ENCODE measurements at regions of chr7 and their contacts with region 1.

Region 1: DNA sequence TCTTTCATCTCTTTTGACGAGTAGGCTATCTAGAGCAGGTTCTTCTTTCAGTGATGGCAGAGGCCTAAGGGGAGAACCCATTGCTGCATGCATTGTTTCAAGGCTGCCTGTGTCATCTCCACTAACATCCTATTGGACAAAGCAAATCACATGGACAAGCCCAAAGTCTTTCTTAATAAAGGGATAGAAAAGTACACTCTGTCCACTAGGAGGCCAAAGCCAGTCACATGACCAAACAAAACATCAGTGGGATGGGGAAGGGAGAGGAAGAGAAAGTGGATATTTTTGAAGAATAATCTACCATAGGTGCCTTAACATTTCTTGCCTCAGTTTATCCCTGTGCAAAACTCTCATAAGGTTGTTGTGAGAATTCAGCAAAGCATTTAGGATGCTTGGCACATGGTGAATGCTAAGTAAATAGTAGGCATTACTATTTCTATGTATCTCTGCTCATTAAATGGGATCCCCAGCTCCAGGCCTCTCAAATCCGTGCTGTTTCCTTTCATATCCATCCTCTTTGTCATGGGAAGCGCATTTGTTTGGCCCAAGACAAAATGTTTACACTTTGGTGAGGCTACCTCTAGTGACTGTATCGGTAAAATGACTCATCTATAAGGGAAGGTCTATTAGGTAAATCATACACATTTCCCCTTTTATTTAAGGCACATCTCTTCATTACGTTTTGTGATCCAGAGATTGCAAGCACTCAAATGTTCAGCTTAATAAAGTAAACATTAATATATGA is 16.7 kb upstream of the CADPS2 start:
- DNase-seq: no peak
- ATAC-seq: no peak
- H3K4me3 ChIP-seq: no peak overlapping the region
- H3K4me3 Mint-ChIP-seq: no peak overlapping the region
- H3K27ac ChIP-seq: no peak overlapping the region
- H3K27ac Mint-ChIP-seq: no peak overlapping the region
- H3K4me1 ChIP-seq: no peaks in the 10 kb centered on the region
- H3K4me1 Mint-ChIP-seq: no peaks in the 10 kb centered on the region
- H3K27me3 ChIP-seq: no peaks in the 10 kb centered on the region
- H3K27me3 Mint-ChIP-seq: no peaks in the 10 kb centered on the region

Region 2: GRCh38 chr7:122383934-122384333 is 519.0 kb before region 1 on chr7:
- CTCF ChIA-PET with region 1: no interaction called
- POLR2A ChIA-PET with region 1: no interaction called
- DNase-seq: no peak
- ATAC-seq: no peak
- H3K4me3 ChIP-seq: no peak overlapping the region
- H3K4me3 Mint-ChIP-seq: no peak overlapping the region
- H3K27ac ChIP-seq: no peak overlapping the region
- H3K27ac Mint-ChIP-seq: no peak overlapping the region
- H3K4me1 ChIP-seq: no peaks in the 10 kb centered on the region
- H3K4me1 Mint-ChIP-seq: no peaks in the 10 kb centered on the region
- H3K27me3 ChIP-seq: no peaks in the 10 kb centered on the region
- H3K27me3 Mint-ChIP-seq: no peaks in the 10 kb centered on the region

Region 3: DNA sequence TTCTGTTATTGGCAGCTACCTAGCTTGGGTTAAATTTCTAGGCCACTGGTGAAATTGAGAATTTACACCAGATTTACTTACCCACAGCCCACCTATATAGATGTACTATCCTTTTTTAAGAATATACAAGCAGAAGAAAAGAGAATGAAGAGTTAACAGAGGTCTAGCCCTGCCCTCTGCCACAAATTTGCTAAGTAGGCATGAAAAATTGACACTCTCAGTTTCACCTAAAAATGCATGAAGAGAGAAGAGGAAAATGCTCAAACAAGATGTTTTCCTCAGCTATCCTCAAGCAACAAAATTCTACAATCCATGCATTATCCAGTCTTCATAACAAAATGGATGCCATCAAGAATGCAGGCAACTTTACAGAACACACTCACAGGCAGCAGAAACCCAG is 175.6 kb before region 1 on chr7:
- CTCF ChIA-PET with region 1: no interaction called
- POLR2A ChIA-PET with region 1: interaction called in 1 of 2 experiments, 13 read pairs
- DNase-seq: no peak
- ATAC-seq: no peak
- H3K4me3 ChIP-seq: no peak overlapping the region
- H3K4me3 Mint-ChIP-seq: no peak overlapping the region
- H3K27ac ChIP-seq: no peak overlapping the region
- H3K27ac Mint-ChIP-seq: no peak overlapping the region
- H3K4me1 ChIP-seq: no peaks in the 10 kb centered on the region
- H3K4me1 Mint-ChIP-seq: no peaks in the 10 kb centered on the region
- H3K27me3 ChIP-seq: no peaks in the 10 kb centered on the region
- H3K27me3 Mint-ChIP-seq: no peaks in the 10 kb centered on the region

Region 4: DNA sequence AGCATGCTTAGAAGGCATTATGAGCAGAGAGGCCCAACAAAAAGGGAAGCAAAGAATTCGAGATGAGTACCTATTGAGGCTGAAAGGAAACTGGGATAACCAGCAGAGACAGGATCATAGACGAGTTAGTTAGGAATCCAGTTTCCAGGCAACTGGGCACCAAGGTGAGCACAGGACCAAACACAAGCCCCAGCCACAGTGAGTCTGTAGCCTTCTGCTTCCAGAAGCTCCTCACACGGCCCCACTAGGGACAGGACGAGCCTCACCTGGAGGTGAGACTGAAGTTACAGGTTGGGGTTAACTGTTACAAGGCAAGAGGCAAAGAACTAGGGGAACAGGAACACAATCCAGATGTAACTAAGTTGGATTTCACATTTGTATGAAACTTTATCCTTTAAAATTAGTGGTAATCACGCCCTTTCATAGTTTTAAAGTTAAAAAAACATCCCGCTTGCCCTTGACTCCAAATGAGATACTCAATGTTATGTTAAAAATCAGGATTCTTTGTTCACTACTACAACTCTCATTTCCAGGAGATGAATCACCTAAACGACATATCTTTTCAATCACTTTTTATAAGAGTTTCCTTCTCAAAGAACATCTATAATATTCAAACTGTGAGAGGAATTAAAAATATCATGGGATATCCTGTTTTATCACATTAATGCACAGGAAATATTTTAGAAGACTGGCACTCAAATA is 58.9 kb before region 1 on chr7:
- CTCF ChIA-PET with region 1: no interaction called
- POLR2A ChIA-PET with region 1: interaction called, 3 to 20 read pairs
- DNase-seq: no peak
- ATAC-seq: no peak
- H3K4me3 ChIP-seq: no peak overlapping the region
- H3K4me3 Mint-ChIP-seq: no peak overlapping the region
- H3K27ac ChIP-seq: no peak overlapping the region
- H3K27ac Mint-ChIP-seq: no peak overlapping the region
- H3K4me1 ChIP-seq: no peaks in the 10 kb centered on the region
- H3K4me1 Mint-ChIP-seq: no peaks in the 10 kb centered on the region
- H3K27me3 ChIP-seq: no peaks in the 10 kb centered on the region
- H3K27me3 Mint-ChIP-seq: no peaks in the 10 kb centered on the region